ENCODE measurements at regions of chr22 and their contacts with region 1.

Region 1: DNA sequence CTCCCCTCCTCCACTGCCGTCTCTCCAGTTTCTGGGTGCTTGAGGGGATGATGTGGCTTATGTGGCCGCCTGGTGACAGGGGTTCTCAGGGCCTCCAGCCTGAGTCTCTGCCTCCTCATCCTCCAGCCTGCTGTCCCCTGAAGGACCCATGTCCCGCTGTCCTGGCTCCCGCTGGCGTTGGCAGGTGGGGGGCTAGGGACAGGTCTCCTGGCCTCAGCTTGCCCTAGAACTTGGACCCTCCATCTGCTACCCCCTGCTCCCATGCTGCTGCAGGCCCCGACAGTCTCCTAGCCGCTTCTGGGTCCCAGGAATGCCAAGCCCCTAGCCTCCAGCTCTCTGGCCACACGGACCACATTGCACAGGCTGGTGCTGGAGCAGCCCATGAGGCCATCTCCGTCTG is 13.9 kb upstream of the CELSR1 start:
- DNase-seq: no peak
- H3K4me3 ChIP-seq: no peak overlapping the region
- H3K27ac ChIP-seq: no peak overlapping the region
- H3K4me1 ChIP-seq: no peaks in the 10 kb centered on the region
- H3K27me3 ChIP-seq: no peaks in the 10 kb centered on the region
- CTCF ChIP-seq: no peak

Region 2: DNA sequence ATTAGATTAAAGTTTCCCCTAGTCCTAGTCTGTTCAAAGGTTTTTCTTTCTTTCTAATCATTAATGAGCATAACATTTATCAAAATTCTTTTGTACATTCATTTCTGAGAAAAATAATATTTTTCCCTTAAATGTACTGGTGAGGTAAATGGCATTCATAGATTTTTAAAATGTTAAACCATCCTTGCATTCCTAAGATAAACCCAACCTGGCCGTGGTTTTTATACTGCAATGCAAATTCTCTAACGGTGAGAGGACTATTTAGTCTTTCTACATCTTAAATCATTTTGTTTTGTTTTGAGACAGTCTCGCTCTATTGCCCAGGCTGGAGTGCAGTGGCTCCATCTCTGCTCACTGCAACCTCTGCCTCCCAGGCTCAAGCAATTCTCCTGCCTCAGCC is 175.2 kb before region 1 on chr22:
- CTCF ChIA-PET with region 1: no interaction called
- POLR2A ChIA-PET with region 1: interaction called, 10 read pairs
- intact Hi-C with region 1: no loop called
- DNase-seq: no peak
- H3K4me3 ChIP-seq: no peak overlapping the region
- H3K27ac ChIP-seq: no peak overlapping the region
- H3K4me1 ChIP-seq: no peaks in the 10 kb centered on the region
- H3K27me3 ChIP-seq: no peaks in the 10 kb centered on the region
- CTCF ChIP-seq: no peak

Region 3: DNA sequence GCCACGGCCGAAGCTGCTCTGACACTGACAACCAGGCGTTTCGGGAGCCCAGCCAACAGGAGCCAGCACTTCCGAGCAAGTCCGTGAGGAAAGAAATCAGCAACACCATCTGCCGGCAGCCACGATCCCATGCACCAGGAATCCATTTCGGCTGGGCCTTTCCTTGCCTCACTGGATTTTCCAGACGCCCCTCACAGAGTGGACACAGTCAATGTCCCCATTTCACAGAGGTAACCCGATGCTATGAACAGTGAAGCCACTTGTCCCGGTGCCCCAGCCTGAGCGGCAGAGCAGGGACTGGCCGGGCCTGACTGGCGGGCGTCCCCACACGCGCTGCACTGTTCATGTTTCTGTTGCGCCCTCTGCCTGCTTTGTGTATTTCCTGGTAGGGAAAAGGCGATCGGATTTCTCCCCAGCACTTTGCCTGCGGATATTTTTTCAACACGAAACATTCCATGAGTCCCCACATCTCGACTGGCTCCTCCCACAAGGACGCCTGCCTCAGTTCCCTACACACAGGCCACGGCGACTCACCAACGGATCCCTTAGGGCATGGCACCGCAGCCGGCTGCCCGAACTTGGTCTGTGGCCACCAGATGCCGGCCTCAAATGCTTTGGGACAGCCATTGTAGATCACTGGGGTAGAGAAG is 160.5 kb before region 1 on chr22:
- CTCF ChIA-PET with region 1: no interaction called
- POLR2A ChIA-PET with region 1: no interaction called
- intact Hi-C with region 1: no loop called
- DNase-seq: peak; percentile 52
- H3K4me3 ChIP-seq: no peak overlapping the region
- H3K27ac ChIP-seq: no peak overlapping the region
- H3K4me1 ChIP-seq: no peaks in the 10 kb centered on the region
- H3K27me3 ChIP-seq: no peaks in the 10 kb centered on the region
- CTCF ChIP-seq: peak; percentile 55

Region 4: DNA sequence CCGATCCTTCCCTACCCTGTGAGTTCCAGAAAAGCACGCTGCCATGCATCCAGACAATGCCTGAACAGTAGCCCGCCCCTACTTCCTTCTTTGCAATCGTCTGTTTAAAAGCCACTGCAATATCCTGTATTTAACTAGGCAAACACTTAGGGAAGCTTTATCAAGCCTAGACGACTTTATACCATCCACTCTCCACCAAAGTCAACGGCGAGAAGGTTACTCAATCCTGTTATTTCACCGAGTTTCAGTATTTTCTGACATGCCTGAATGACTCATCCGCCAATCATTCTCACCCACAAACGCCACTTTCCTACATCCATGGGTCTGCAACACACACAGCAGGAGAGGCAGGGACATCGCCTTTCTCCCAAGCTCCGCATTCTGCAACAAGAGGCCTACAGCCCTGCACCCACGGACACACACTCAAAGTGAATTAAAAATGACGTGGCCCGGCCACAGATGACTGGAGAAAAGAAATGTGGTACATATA is 23.2 kb before region 1 on chr22:
- CTCF ChIA-PET with region 1: no interaction called
- POLR2A ChIA-PET with region 1: no interaction called
- intact Hi-C with region 1: no loop called
- DNase-seq: peak; percentile 76
- H3K4me3 ChIP-seq: no peak overlapping the region
- H3K27ac ChIP-seq: no peak overlapping the region
- H3K4me1 ChIP-seq: peaks cover 5% of the 10 kb centered on the region
- H3K27me3 ChIP-seq: no peaks in the 10 kb centered on the region
- CTCF ChIP-seq: no peak

Region 5: DNA sequence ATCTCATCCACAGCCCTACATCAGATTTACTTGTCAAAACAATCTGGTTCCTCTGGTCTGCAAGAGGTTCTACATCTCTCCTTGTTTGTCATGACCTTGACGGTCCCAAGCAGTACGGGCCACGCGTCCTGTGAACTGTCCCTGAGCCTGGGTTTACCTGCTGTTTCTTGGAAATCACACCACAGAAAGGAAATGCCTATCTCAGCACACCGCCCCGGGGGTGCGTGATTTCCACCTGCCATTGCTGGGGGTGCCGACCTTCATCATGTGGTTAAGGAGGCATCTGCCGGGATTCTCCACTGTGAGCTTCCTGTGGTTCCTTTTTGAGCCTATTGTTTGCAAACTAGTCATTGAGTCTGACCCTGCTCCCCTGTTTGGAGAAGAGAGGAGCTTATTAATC is 1912.9 kb after region 1 on chr22:
- CTCF ChIA-PET with region 1: no interaction called
- POLR2A ChIA-PET with region 1: no interaction called
- intact Hi-C with region 1: no loop called
- DNase-seq: no peak
- H3K4me3 ChIP-seq: no peak overlapping the region
- H3K27ac ChIP-seq: no peak overlapping the region
- H3K4me1 ChIP-seq: no peaks in the 10 kb centered on the region
- H3K27me3 ChIP-seq: no peaks in the 10 kb centered on the region
- CTCF ChIP-seq: no peak

Measured in A673 (cell line).